ENCODE measurements at regions of chr12 and their contacts with region 1.

Region 1: GRCh38 chr12:56333679-56334489 is at the start of gene PAN2:
- DNase-seq: peak; percentile 94
- H3K4me3 Mint-ChIP-seq: peak within 1 kb of the TSS; percentile 87
- H3K27ac Mint-ChIP-seq: peak within 1 kb of the TSS; percentile 100
- H3K4me1 Mint-ChIP-seq: peaks cover 42% of the 10 kb centered on the region
- H3K27me3 Mint-ChIP-seq: no peaks in the 10 kb centered on the region
- total RNA-seq, gene PAN2: 20.9 and 21.3 TPM in 2 replicates

Region 2: DNA sequence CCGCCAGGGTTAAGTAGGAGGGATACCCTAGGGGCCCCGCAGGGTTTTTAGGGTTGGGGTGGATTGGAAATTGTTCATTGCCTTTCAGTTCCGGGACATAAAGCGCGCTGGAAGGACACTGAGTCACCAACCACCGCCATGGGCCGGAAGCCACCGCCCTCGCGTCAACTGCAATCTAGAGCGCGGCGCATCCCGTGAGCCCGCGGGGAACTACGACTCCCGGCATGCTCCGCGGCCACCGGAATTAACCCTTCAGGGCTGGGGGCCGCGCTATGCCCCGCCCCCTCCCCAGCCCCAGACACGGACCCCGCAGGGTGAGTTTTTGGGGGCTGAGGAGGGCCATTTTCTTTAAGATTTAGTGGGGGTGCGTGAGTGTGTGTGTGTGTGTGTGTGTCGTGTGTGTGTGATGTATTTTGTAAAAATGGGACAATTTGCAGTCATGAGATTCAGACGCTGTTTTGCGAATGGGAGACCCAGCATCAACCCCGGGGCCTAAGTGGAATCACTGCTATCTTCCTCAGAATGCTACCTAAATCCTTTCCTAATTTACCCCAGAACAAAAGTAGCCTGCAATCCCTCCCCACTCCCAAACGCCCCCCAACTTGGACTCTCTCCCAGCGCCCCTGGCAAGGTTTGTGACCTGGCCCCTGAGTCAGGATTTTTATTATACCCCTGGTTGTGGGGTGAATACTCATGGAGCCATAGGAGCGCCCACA is 181.4 kb before region 1 on chr12 and contains the start of gene MYL6B:
- intact Hi-C with region 1: loop called (anchors 2 kb)
- DNase-seq: peak; percentile 92
- H3K4me3 Mint-ChIP-seq: peak within 1 kb of the TSS; percentile 88
- H3K27ac Mint-ChIP-seq: peak within 1 kb of the TSS; percentile 99
- H3K4me1 Mint-ChIP-seq: peaks cover 39% of the 10 kb centered on the region
- H3K27me3 Mint-ChIP-seq: no peaks in the 10 kb centered on the region
- total RNA-seq, gene MYL6B: 58.8 and 67.6 TPM in 2 replicates

Region 3: GRCh38 chr12:56274299-56274698 is 59.6 kb before region 1 on chr12:
- intact Hi-C with region 1: no loop called
- DNase-seq: no peak
- H3K4me3 Mint-ChIP-seq: no peak overlapping the region
- H3K27ac Mint-ChIP-seq: no peak overlapping the region
- H3K4me1 Mint-ChIP-seq: no peaks in the 10 kb centered on the region
- H3K27me3 Mint-ChIP-seq: no peaks in the 10 kb centered on the region

Region 4: GRCh38 chr12:56299853-56300643 is 33.8 kb before region 1 on chr12 and contains the start of gene CS:
- intact Hi-C with region 1: loop called (anchors 1 kb)
- DNase-seq: peak; percentile 98
- H3K4me3 Mint-ChIP-seq: peak within 1 kb of the TSS; percentile 98
- H3K27ac Mint-ChIP-seq: peak within 1 kb of the TSS; percentile 90
- H3K4me1 Mint-ChIP-seq: peaks cover 51% of the 10 kb centered on the region
- H3K27me3 Mint-ChIP-seq: no peaks in the 10 kb centered on the region
- total RNA-seq, gene CS: 269 and 280 TPM in 2 replicates

Region 5: GRCh38 chr12:56346703-56347102 is 12.8 kb after region 1 on chr12:
- intact Hi-C with region 1: no loop called
- DNase-seq: no peak
- H3K4me3 Mint-ChIP-seq: no peak overlapping the region
- H3K27ac Mint-ChIP-seq: no peak overlapping the region
- H3K4me1 Mint-ChIP-seq: peaks cover under 1% of the 10 kb centered on the region
- H3K27me3 Mint-ChIP-seq: no peaks in the 10 kb centered on the region

Region 6: DNA sequence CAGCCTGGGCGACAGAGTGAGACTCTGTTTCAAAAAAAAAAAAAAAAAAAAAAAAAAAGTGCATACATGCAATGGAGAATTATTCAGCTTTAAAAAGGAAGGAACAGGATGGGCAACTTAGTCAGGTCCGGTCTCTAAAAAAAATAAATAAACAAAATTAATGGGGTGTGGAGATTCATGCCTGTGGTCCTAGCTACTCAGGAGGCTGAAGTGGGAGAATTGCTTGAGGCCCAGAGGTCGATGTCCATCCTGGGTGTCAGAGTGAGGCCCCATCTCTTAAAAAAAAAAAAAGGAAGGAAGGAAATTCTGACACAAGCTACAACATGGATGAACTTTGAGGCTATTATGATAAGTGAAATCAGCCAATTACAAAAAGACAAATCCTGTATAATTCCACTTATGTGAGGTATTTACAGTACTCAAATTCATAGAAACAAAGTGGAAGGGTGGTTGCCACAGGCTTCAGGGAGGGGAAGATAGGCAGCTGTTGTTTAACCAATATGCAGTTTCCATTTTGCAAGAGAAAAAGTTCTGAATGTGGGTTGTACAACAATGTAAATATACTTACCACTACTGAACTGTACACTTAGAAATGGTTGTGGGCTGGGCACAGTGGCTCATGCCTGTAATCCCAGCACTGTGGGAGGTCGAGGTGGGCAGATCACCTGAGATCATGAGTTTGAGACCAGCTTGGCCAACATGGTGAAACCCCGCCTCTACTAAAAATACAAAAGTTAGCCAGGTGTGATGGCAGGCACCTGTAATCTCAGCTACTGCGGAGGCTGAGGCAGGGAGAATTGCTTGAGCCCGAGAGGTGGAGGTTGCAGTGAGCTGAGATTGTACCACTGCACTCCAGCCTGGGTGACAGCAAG is 41.1 kb after region 1 on chr12:
- intact Hi-C with region 1: no loop called
- DNase-seq: no peak
- H3K4me3 Mint-ChIP-seq: no peak overlapping the region
- H3K27ac Mint-ChIP-seq: no peak overlapping the region
- H3K4me1 Mint-ChIP-seq: no peaks in the 10 kb centered on the region
- H3K27me3 Mint-ChIP-seq: peaks cover 14% of the 10 kb centered on the region

Region 7: GRCh38 chr12:56448860-56449621 is 115.2 kb after region 1 on chr12 and contains the start of gene TIMELESS:
- intact Hi-C with region 1: loop called (anchors 2 kb)
- DNase-seq: peak; percentile 87
- H3K4me3 Mint-ChIP-seq: peak within 1 kb of the TSS; percentile 92
- H3K27ac Mint-ChIP-seq: peak within 1 kb of the TSS; percentile 85
- H3K4me1 Mint-ChIP-seq: peaks cover 27% of the 10 kb centered on the region
- H3K27me3 Mint-ChIP-seq: no peaks in the 10 kb centered on the region
- total RNA-seq, gene TIMELESS: 44.9 and 45.8 TPM in 2 replicates

Region 8: GRCh38 chr12:56537546-56537945 is 203.7 kb after region 1 on chr12:
- intact Hi-C with region 1: no loop called
- DNase-seq: no peak
- H3K4me3 Mint-ChIP-seq: no peak overlapping the region
- H3K27ac Mint-ChIP-seq: no peak overlapping the region
- H3K4me1 Mint-ChIP-seq: no peaks in the 10 kb centered on the region
- H3K27me3 Mint-ChIP-seq: peaks cover 8% of the 10 kb centered on the region

Region 9: DNA sequence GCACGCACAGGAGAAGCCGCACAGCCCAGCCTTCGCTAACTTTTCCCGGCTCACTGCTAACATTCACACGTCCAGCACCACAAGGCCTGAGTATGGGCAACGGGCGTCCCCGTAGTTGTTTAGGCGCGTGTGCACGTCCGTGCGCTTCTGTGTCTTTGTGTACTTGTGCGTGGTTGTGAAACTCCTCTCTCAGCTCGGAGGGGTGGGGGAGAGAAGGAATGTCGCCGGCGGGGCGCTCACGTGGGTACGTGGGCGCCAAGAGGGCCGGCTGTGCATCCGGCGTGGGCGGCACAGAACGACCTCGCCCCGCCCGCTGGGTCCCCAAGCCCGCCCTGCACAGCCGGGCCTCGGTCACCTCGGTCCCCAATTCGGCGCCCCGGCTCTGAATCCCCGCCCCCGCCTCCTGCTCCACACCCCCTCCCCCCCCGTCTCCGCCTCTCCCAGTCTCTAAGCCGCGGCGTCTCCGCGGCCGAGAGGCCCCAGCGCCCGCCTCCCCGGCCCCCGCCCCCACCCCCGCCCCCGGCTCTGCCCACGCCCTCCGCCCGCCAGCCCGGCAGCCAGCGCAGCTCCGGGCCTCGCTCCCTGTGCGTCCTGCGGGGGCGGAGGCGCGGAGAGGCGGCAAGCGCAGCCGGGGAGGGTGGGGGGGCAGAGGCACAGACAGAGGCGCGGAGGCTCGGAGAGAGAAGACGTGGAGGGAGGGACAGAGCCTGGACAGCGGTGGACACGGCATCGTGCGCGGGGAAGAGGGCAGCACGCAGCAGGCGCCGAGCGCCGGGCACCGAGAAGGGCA is 754.8 kb after region 1 on chr12 and contains the start of gene NAB2:
- intact Hi-C with region 1: loop called (anchors 10 kb)
- DNase-seq: peak; percentile 88
- H3K4me3 Mint-ChIP-seq: peak within 1 kb of the TSS; percentile 97
- H3K27ac Mint-ChIP-seq: peak within 1 kb of the TSS; percentile 98
- H3K4me1 Mint-ChIP-seq: peaks cover 77% of the 10 kb centered on the region
- H3K27me3 Mint-ChIP-seq: no peaks in the 10 kb centered on the region
- total RNA-seq, gene NAB2: 73.6 and 80.3 TPM in 2 replicates